Activated naive CD4-positive, alpha-beta T cell treated with anti-CD3 and anti-CD28 coated beads, Interleukin-2, amount 10 ng/mL, durations not matched to agents 7 days and 5 days (primary cell): ENCODE measurements at regions of chr10 and their contacts with region 1.

Region 1: GRCh38 chr10:75019370-75019769 is 92.1 kb upstream of the SAMD8 start:
- DNase-seq: no peak
- H3K4me3 Mint-ChIP-seq: no peak overlapping the region
- H3K27ac Mint-ChIP-seq: no peak overlapping the region
- H3K4me1 Mint-ChIP-seq: peaks cover 25% of the 10 kb centered on the region
- H3K27me3 Mint-ChIP-seq: no peaks in the 10 kb centered on the region

Region 2: GRCh38 chr10:74244097-74244685 is 775.2 kb before region 1 on chr10:
- CTCF ChIA-PET with region 1: interaction called, 27 read pairs
- DNase-seq: peak; percentile 49
- H3K4me3 Mint-ChIP-seq: no peak overlapping the region
- H3K27ac Mint-ChIP-seq: no peak overlapping the region
- H3K4me1 Mint-ChIP-seq: no peaks in the 10 kb centered on the region
- H3K27me3 Mint-ChIP-seq: no peaks in the 10 kb centered on the region

Region 3: GRCh38 chr10:74419958-74420375 is 599.4 kb before region 1 on chr10:
- CTCF ChIA-PET with region 1: interaction called, 17 read pairs
- DNase-seq: peak; percentile 59
- H3K4me3 Mint-ChIP-seq: no peak overlapping the region
- H3K27ac Mint-ChIP-seq: no peak overlapping the region
- H3K4me1 Mint-ChIP-seq: peaks cover 7% of the 10 kb centered on the region
- H3K27me3 Mint-ChIP-seq: no peaks in the 10 kb centered on the region

Region 4: DNA sequence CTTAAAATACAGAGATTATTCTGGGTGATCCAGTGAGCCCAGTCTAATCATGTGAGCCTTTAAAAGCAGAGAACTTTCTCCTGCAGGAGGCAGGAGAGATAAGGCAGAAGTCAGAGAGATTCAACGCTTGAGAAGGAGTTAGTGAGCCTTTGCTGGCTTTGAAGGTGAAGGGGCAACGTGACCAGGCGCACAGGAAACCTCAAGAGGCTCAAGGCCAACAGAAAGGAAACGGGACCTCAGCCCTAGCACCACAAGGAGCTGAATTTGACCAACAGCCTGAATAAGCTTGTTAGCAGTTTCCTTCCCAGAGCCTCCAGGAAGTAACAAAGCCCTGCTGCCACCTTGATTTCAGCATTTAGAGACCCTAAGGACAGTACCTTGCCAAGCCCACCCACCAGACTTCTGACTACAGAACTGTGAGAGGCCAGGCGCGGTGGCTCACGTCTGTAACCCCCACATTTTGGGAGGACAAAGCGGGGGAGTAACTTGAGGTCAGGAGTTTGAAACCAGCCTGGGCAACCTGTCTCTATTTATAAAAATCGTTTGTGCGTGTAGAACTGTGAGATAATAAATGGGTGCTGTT is 280.3 kb before region 1 on chr10:
- CTCF ChIA-PET with region 1: interaction called, 40 read pairs
- DNase-seq: peak; percentile 51
- H3K4me3 Mint-ChIP-seq: no peak overlapping the region
- H3K27ac Mint-ChIP-seq: peak overlapping the region; percentile 75
- H3K4me1 Mint-ChIP-seq: peaks cover 20% of the 10 kb centered on the region
- H3K27me3 Mint-ChIP-seq: no peaks in the 10 kb centered on the region

Region 5: DNA sequence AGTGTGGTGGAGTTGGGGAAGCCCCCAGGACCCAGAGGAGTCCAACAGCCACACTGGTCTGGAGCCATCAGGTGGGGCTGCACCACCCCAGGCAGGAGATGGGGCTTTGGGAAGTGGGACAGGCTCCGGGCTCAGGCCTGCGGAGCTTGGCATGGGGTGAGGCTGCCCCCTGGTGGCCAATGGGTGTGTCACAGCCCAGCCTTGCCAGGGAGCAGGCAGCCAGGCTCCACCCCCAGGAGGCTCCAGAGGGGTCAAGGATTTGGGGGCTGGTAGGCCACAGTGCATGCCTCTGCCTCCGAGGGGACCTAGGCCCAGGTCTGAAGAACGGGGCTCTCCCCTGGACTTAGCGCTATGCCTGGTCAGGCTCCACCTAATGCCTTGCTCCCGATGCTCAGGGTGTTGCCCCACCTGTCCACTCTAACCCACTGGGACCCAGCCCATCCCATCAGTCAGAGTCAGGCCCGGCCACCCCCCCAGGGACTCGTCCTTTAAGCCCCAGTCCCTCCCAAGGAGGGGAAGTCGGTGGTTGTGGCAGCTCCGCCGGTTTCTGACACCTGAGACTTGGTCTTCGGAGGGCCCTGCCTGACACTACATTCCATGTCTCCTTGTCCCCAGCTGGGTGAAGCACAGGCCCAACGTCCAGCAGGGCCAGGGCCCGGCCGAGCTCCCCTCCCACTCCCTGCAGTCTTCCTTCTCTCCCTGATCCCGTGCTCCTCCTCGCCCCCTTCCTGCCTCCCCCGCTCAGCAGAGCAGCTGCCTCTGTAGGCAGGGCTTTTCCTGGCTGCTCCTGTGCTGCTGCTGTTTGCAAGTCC is 80.8 kb after region 1 on chr10:
- CTCF ChIA-PET with region 1: interaction called, 14 read pairs
- DNase-seq: peak; percentile 85
- H3K4me3 Mint-ChIP-seq: no peak overlapping the region
- H3K27ac Mint-ChIP-seq: no peak overlapping the region
- H3K4me1 Mint-ChIP-seq: peaks cover 4% of the 10 kb centered on the region
- H3K27me3 Mint-ChIP-seq: peaks cover 4% of the 10 kb centered on the region

Region 6: DNA sequence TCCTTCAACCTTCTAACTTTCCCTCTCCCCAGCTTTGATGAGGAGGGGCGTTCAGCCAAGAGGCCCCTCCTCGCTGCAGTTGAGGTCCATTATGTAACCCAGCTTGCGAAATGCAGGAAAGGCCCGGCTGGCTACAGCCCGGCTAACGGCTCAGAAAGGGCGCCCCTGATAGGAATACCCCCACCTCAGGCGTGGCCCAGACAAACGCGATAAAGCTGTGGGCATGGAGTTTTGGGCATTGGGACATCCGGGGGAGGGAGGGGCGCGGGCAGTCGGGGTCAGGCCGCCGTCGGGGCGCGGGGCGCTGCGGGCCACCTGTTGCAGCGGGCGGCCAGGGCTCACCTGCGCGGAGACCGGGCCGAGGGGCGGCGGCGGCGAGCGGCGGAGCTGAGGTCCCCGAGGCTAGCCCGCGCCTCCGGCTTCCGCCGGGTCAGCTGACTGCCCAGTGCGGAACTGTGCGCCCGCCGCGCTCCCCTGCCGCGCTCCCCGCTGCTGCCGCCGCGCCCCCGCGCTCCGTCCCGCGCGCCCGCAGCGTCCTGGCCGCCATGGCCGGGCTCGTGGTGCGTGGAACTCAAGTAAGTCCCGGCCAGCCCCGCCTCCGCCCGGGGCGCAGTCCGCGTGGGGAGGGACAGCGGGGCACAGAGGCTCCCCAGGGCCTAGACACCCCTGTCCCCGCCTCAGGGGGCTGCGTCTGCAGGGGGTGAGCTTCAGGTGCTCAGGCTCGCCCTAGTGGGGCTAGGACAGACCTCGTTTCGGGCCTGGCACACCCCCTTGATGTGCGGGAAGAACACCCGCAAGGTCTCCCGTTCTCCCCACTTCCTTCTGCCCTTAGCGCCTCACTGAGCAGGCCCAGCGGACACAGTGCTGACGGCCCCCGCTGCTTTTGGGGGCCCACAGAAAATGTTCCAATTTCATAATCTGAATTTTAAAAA is 412.1 kb after region 1 on chr10 and contains the start of gene LRMDA:
- CTCF ChIA-PET with region 1: no interaction called
- DNase-seq: no peak
- H3K4me3 Mint-ChIP-seq: no peak within 1 kb of the TSS
- H3K27ac Mint-ChIP-seq: peak within 1 kb of the TSS; percentile 7
- H3K4me1 Mint-ChIP-seq: peaks cover 3% of the 10 kb centered on the region
- H3K27me3 Mint-ChIP-seq: peaks cover 59% of the 10 kb centered on the region